ENCODE measurements at regions of chr11 and their contacts with region 1.

Region 1: DNA sequence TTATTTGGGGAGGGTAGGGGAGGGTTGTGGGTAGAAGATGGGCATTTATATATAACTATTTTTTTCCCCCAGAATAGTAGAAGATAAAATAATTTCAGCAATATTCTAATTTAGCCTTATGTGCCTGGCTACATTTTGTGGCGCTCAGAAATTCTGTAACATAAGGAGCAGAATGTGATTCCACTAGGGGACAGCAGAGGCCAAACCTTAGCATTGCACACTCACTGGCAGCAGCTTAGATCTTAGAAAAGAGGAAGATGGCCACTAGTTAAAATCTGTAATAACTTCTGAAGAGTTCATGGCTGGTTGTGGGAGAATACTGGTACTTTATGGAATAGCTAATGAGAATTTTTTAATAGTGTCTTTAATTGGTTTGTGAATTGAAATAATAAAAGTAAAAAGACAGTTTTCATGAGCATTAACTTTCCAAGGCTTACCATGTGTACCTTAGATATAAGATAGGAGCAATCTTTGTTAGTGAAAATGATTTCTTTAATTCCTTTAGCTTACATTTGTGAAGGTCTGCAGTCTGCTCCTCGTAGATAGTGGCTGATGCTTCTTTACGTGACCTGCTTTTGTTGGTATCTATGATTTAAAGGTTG is 33.1 kb downstream of the DDX10 start:
- DNase-seq: peak; percentile 72 to 73
- H3K4me3 ChIP-seq: no peak overlapping the region
- H3K4me3 Mint-ChIP-seq: no peak overlapping the region
- H3K27ac Mint-ChIP-seq: peak overlapping the region; percentile 21
- H3K4me1 ChIP-seq: peaks cover 18% of the 10 kb centered on the region
- H3K4me1 Mint-ChIP-seq: peaks cover 19% of the 10 kb centered on the region
- H3K27me3 ChIP-seq: no peaks in the 10 kb centered on the region
- H3K27me3 Mint-ChIP-seq: no peaks in the 10 kb centered on the region
- CTCF ChIP-seq: peak; percentile 94 to 100

Region 2: GRCh38 chr11:108788565-108789199 is 90.7 kb after region 1 on chr11:
- CTCF ChIA-PET with region 1: no interaction called
- POLR2A ChIA-PET with region 1: no interaction called
- intact Hi-C with region 1: loop called (anchors 5 kb)
- DNase-seq: peak in 1 of 2 experiments; percentile 42
- H3K4me3 ChIP-seq: no peak overlapping the region
- H3K4me3 Mint-ChIP-seq: no peak overlapping the region
- H3K27ac Mint-ChIP-seq: no peak overlapping the region
- H3K4me1 ChIP-seq: peaks cover 10% of the 10 kb centered on the region
- H3K4me1 Mint-ChIP-seq: peaks cover 12% of the 10 kb centered on the region
- H3K27me3 ChIP-seq: no peaks in the 10 kb centered on the region
- H3K27me3 Mint-ChIP-seq: no peaks in the 10 kb centered on the region
- CTCF ChIP-seq: peak; percentile 54 to 56

Region 3: GRCh38 chr11:108912581-108912980 is 214.6 kb after region 1 on chr11:
- CTCF ChIA-PET with region 1: no interaction called
- POLR2A ChIA-PET with region 1: no interaction called
- intact Hi-C with region 1: loop called (anchors 2 kb)
- DNase-seq: peak; percentile 35 to 68
- H3K4me3 ChIP-seq: no peak overlapping the region
- H3K4me3 Mint-ChIP-seq: peak overlapping the region; percentile 12
- H3K27ac Mint-ChIP-seq: peak overlapping the region; percentile 70
- H3K4me1 ChIP-seq: peaks cover 23% of the 10 kb centered on the region
- H3K4me1 Mint-ChIP-seq: peaks cover 23% of the 10 kb centered on the region
- H3K27me3 ChIP-seq: no peaks in the 10 kb centered on the region
- H3K27me3 Mint-ChIP-seq: no peaks in the 10 kb centered on the region
- CTCF ChIP-seq: no peak

Region 4: GRCh38 chr11:109062445-109062844 is 364.5 kb after region 1 on chr11:
- CTCF ChIA-PET with region 1: no interaction called
- POLR2A ChIA-PET with region 1: no interaction called
- intact Hi-C with region 1: loop called (anchors 5 kb)
- DNase-seq: no peak
- H3K4me3 ChIP-seq: no peak overlapping the region
- H3K4me3 Mint-ChIP-seq: no peak overlapping the region
- H3K27ac Mint-ChIP-seq: no peak overlapping the region
- H3K4me1 ChIP-seq: peaks cover 24% of the 10 kb centered on the region
- H3K4me1 Mint-ChIP-seq: peaks cover 25% of the 10 kb centered on the region
- H3K27me3 ChIP-seq: no peaks in the 10 kb centered on the region
- H3K27me3 Mint-ChIP-seq: no peaks in the 10 kb centered on the region
- CTCF ChIP-seq: no peak